ENCODE measurements at regions of chr2 and their contacts with region 1.

Region 1: DNA sequence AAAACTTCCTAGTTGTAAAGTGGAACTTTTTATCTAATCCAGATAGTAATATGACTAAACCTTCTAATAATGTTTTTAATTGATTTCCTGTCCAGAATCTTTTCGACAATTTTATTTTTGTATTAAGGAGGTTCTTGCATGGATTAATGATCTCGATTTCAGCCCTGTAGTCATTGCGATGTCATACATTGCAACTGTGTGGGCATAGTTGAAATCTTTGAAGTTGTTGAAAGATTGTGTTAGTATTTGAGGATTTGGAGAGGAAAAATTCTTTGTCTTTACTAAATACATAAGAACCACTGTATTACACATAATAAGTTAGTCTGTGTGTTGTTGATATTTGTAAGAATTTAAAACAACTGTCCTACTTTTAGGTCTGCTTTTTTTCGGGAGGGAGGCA is 31.1 kb downstream of the ACSL3 start:
- DNase-seq: no peak
- ATAC-seq: no peak
- H3K4me3 Mint-ChIP-seq: no peak overlapping the region
- H3K27ac Mint-ChIP-seq: no peak overlapping the region
- H3K4me1 Mint-ChIP-seq: peaks cover 10% of the 10 kb centered on the region
- H3K27me3 Mint-ChIP-seq: no peaks in the 10 kb centered on the region
- CTCF ChIP-seq: no peak

Region 2: DNA sequence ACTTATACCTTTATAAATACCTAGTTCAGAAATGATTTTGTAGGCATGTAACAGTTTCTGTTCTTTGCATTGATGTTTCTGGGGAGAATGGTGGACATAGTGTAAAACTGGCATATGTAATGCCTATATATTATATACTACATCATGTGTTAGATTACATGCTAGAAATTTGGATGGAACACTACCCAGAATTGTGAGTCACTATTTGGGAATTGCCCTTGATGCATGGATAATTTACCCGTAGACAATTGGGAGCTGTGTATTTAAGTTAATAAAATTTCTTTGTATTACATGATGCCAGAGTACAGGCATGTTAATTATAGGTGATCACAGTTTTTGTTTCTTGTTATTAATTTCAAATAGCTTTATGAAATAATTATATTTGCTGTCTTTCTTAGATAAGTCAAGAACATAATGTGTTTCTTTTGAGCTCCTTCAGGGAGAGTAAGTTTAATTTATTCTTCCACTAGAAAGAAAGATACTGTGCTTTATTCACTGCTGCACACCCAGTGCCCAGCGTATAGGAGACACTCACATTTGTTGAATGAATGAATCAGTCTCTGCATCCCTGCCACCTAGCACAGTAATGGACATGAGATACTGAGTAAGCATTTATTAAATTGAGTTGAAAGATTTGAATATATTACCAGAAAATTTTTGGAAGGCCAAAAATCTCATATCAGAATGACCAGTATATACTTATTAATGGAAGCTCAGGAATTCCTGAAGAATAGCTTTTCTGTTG is 14.2 kb before region 1 on chr2:
- CTCF ChIA-PET with region 1: no interaction called
- POLR2A ChIA-PET with region 1: interaction called, 3 read pairs
- intact Hi-C with region 1: loop called (anchors 1 kb)
- DNase-seq: no peak
- ATAC-seq: no peak
- H3K4me3 Mint-ChIP-seq: no peak overlapping the region
- H3K27ac Mint-ChIP-seq: no peak overlapping the region
- H3K4me1 Mint-ChIP-seq: peaks cover 36% of the 10 kb centered on the region
- H3K27me3 Mint-ChIP-seq: no peaks in the 10 kb centered on the region
- CTCF ChIP-seq: no peak

Region 3: GRCh38 chr2:222903234-222904220 is 11.6 kb after region 1 on chr2:
- CTCF ChIA-PET with region 1: interaction called, 12 read pairs
- POLR2A ChIA-PET with region 1: no interaction called
- intact Hi-C with region 1: loop called (anchors 2 kb)
- DNase-seq: no peak
- ATAC-seq: peak; percentile 69
- H3K4me3 Mint-ChIP-seq: no peak overlapping the region
- H3K27ac Mint-ChIP-seq: no peak overlapping the region
- H3K4me1 Mint-ChIP-seq: peaks cover 9% of the 10 kb centered on the region
- H3K27me3 Mint-ChIP-seq: no peaks in the 10 kb centered on the region
- CTCF ChIP-seq: no peak